ENCODE measurements at regions of chr12 and their contacts with region 1.

Region 1: GRCh38 chr12:83042441-83043200 is 355.9 kb downstream of the TMTC2 start:
- DNase-seq: no peak
- ATAC-seq: no peak
- H3K4me3 ChIP-seq: no peak overlapping the region
- H3K27ac ChIP-seq: no peak overlapping the region
- H3K4me1 ChIP-seq: no peaks in the 10 kb centered on the region
- H3K27me3 ChIP-seq: no peaks in the 10 kb centered on the region
- CTCF ChIP-seq: no peak

Region 2: GRCh38 chr12:82040987-82041743 is 1001.5 kb before region 1 on chr12:
- intact Hi-C with region 1: loop called in 1 of 10 experiments (anchors 5 kb)
- DNase-seq: no peak
- ATAC-seq: no peak
- H3K4me3 ChIP-seq: no peak overlapping the region
- H3K27ac ChIP-seq: no peak overlapping the region
- H3K4me1 ChIP-seq: no peaks in the 10 kb centered on the region
- H3K27me3 ChIP-seq: no peaks in the 10 kb centered on the region
- CTCF ChIP-seq: no peak

Region 3: DNA sequence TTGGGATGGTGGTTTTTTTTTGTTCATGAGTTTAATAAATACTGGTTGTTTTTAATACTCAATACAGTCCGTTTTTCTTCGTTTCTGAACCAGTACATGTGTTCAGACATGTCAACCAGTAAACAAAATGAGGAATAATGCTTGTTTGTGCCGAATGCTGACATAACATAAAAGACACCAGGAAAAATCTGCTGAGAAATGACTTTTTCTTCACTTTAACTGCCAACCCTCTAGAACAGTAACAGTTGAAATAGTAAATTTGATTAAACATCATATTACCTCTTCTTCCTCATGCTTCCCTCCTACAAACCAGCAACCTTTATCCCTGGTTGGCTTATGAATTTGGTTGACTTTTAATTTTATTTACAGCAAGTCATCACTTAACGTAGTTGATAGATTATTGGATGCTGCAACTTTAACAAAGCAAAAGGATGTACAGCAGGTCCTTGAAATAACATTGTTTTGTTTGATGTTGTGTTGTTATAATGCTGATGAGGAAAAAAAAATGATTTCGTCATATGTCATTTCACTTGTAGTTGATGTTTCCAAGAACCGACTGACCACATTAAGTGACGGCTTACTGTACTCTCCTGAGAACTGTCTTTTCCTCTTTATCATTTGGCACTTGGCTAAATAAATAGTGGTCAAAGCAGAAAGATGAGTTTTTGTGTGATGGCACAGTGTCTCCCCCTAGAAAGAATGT is 15.4 kb before region 1 on chr12:
- intact Hi-C with region 1: loop called in 1 of 10 experiments (anchors 2 kb)
- DNase-seq: no peak
- ATAC-seq: no peak
- H3K4me3 ChIP-seq: no peak overlapping the region
- H3K27ac ChIP-seq: no peak overlapping the region
- H3K4me1 ChIP-seq: no peaks in the 10 kb centered on the region
- H3K27me3 ChIP-seq: no peaks in the 10 kb centered on the region
- CTCF ChIP-seq: no peak

Region 4: GRCh38 chr12:83161456-83161855 is 118.8 kb after region 1 on chr12:
- intact Hi-C with region 1: no loop called
- DNase-seq: no peak
- ATAC-seq: no peak
- H3K4me3 ChIP-seq: no peak overlapping the region
- H3K27ac ChIP-seq: no peak overlapping the region
- H3K4me1 ChIP-seq: no peaks in the 10 kb centered on the region
- H3K27me3 ChIP-seq: no peaks in the 10 kb centered on the region
- CTCF ChIP-seq: no peak

Measured in heart right ventricle (tissue), 16 donors.